Activated T-helper 1 cell treated with anti-CD3 and anti-CD28 coated beads, Interleukin-12 subunit alpha, Interleukin-12 subunit beta, Interleukin-2, Interleukin-4 antibody, amounts not matched to agents 30 ng/mL and 10 ng/mL and 1 ng/mL, durations not matched to agents 14 hours and 24 hours and 36 hours (primary cell): ENCODE measurements at regions of chr20 and their contacts with region 1.

Region 1: DNA sequence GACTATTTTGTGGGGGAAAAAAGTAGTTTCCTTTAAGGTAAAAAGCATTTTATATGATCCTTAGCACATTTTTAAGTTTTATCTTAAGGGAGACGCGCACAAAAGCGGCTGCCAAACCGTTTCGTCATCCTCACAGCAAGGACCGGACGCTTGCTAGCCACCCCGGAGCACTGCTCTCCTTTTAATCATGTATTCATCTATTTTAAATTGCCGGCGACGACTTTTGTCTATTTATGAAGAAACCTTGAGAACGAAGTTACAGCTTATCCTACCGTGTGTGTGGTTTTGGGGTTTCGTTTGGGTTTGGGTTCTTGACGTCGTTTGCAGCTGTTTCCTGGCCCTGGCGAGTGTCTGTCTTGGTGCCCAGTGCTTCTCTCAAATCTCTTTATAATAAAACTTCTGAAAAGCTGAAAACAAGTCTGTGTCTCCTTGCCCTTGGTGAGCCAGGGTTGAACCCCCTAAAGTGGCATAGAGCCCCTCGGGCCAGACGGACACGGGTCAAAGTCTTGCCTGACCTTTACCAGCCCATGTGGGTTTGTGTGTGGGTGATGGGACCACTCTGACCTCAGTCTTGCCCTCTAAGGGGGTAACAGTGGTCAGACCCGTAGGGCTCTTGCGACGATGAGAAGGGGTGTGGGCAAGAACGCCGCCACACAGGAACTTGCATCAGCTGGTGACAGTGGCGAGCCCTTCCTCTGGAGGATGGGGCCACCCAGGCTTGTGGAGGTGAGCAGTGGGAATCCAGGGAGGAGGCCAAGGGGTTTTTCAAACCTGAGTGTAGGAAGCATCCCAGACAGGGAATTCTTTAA is 117.6 kb downstream of the JPH2 start:
- DNase-seq: peak; percentile 65
- H3K4me3 Mint-ChIP-seq: peak overlapping the region; percentile 52
- H3K27ac Mint-ChIP-seq: peak overlapping the region; percentile 87
- H3K4me1 Mint-ChIP-seq: peaks cover 69% of the 10 kb centered on the region
- H3K27me3 Mint-ChIP-seq: peaks cover 4% of the 10 kb centered on the region

Region 2: GRCh38 chr20:43914311-43915210 is 154.8 kb before region 1 on chr20 and contains the start of gene TOX2:
- intact Hi-C with region 1: loop called (anchors 2 kb)
- DNase-seq: peak; percentile 42
- H3K4me3 Mint-ChIP-seq: peak within 1 kb of the TSS; percentile 87
- H3K27ac Mint-ChIP-seq: peak within 1 kb of the TSS; percentile 81
- H3K4me1 Mint-ChIP-seq: peaks cover 29% of the 10 kb centered on the region
- H3K27me3 Mint-ChIP-seq: peaks cover 37% of the 10 kb centered on the region
- total RNA-seq, gene TOX2: 4.0 and 4.8 TPM in 2 replicates

Region 3: DNA sequence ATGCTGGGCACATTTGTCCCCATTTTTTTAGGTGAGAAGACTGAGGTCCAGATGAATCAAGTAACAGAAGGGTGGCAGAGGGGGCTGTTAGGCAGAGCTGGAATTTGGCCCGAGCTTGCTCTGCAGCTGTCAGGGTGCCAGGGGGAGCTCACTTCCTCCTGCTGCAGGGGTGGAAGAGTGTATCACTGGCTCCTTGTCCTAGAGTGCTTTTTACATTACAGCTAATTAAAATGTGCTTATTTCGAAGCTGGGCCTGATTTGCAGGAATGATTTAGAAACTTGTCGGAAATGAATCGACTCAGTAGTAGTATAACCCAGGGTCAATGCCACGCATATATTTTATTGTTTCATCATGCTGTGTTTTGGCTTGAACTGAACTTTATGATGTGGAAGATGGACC is 143.6 kb before region 1 on chr20:
- intact Hi-C with region 1: loop called (anchors 5 kb)
- DNase-seq: no peak
- H3K4me3 Mint-ChIP-seq: peak overlapping the region; percentile 56
- H3K27ac Mint-ChIP-seq: peak overlapping the region; percentile 70
- H3K4me1 Mint-ChIP-seq: peaks cover 61% of the 10 kb centered on the region
- H3K27me3 Mint-ChIP-seq: peaks cover 21% of the 10 kb centered on the region

Region 4: DNA sequence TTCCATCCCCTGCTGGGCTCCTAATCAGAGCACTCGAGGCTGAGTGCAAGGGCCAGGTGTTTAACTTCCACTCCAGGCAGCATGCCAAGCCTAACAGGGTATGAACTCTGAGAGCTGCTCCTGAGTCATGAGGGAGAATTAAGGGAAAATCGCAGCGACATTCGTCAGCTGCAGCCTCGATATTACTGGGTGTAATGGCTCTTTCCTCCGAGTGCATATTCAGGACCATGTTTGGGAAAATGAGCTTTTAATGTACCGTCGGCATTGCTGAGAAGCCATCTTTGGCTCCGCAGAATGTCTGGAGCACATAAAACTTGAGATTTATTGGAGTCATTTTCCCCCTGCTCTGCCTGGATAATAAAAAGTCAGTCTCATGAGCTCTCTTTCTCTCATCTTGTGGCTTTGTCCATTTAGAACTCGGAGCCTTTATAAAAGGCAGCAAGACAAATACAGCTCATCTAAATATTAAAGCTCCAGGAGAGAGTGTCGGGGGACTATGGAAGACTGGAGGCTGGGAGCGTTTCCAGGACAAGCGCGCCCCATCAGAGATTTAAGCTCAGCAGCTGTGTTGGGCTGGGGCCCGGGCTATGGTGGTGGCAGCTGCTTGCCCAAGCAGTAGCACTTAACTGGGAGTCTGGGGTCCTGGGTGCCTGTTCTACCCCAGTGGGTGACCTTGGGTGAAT is 51.0 kb before region 1 on chr20:
- intact Hi-C with region 1: loop called (anchors 2 kb)
- DNase-seq: no peak
- H3K4me3 Mint-ChIP-seq: no peak overlapping the region
- H3K27ac Mint-ChIP-seq: no peak overlapping the region
- H3K4me1 Mint-ChIP-seq: peaks cover 32% of the 10 kb centered on the region
- H3K27me3 Mint-ChIP-seq: peaks cover 27% of the 10 kb centered on the region

Region 5: GRCh38 chr20:44056010-44056698 is 13.3 kb before region 1 on chr20:
- intact Hi-C with region 1: loop called (anchors 1 kb)
- DNase-seq: no peak
- H3K4me3 Mint-ChIP-seq: no peak overlapping the region
- H3K27ac Mint-ChIP-seq: no peak overlapping the region
- H3K4me1 Mint-ChIP-seq: peaks cover 20% of the 10 kb centered on the region
- H3K27me3 Mint-ChIP-seq: peaks cover 7% of the 10 kb centered on the region